ENCODE measurements at regions of chr3 and their contacts with region 1.

Region 1: GRCh38 chr3:105827959-105828358 is 40.9 kb downstream of the CBLB start:
- DNase-seq: peak; percentile 53
- H3K4me3 Mint-ChIP-seq: peak overlapping the region; percentile 27
- H3K27ac Mint-ChIP-seq: peak overlapping the region; percentile 100
- H3K4me1 Mint-ChIP-seq: peaks cover 87% of the 10 kb centered on the region
- H3K27me3 Mint-ChIP-seq: no peaks in the 10 kb centered on the region

Region 2: GRCh38 chr3:105366326-105367062 is 461.5 kb before region 1 on chr3 and contains the start of gene ALCAM:
- CTCF ChIA-PET with region 1: no interaction called
- POLR2A ChIA-PET with region 1: no interaction called
- intact Hi-C with region 1: loop called (anchors 2 kb)
- DNase-seq: peak; percentile 91
- H3K4me3 Mint-ChIP-seq: peak within 1 kb of the TSS; percentile 84
- H3K27ac Mint-ChIP-seq: peak within 1 kb of the TSS; percentile 97
- H3K4me1 Mint-ChIP-seq: peaks cover 28% of the 10 kb centered on the region
- H3K27me3 Mint-ChIP-seq: peaks cover 24% of the 10 kb centered on the region
- total RNA-seq, gene ALCAM: 20.3 to 20.6 TPM

Region 3: DNA sequence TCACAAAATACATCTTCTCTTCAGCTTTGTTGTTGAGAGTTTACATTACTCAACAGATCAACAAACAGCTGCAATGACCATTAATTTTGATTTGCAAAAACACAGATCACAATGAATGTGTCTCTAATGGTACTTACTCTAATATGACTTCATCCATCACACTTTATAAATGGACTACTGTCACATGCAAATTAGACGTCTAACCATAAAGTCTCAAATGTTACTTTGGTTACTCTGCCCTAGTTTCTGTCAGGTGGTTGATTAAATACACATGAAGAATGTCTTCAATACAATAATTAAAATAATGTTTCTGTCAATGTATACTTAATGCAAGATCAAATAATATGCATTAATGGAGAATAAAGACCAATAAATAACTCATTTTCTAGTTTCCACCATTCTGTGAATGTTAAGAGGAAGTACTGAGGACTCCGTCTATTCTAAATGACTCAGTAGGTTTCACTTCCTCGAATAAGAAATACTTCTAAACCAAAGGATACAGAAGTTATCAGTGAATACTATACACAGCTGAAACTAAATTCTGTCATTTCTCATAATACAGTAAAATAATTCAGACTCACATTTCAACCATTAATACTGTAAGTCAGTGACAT is 104.9 kb before region 1 on chr3:
- CTCF ChIA-PET with region 1: no interaction called
- POLR2A ChIA-PET with region 1: no interaction called
- intact Hi-C with region 1: no loop called
- DNase-seq: no peak
- H3K4me3 Mint-ChIP-seq: no peak overlapping the region
- H3K27ac Mint-ChIP-seq: no peak overlapping the region
- H3K4me1 Mint-ChIP-seq: peaks cover 14% of the 10 kb centered on the region
- H3K27me3 Mint-ChIP-seq: no peaks in the 10 kb centered on the region

Region 4: GRCh38 chr3:105747060-105747541 is 80.9 kb before region 1 on chr3:
- CTCF ChIA-PET with region 1: no interaction called
- POLR2A ChIA-PET with region 1: interaction called, 4 read pairs
- intact Hi-C with region 1: loop called (anchors 1 kb)
- DNase-seq: no peak
- H3K4me3 Mint-ChIP-seq: no peak overlapping the region
- H3K27ac Mint-ChIP-seq: peak overlapping the region; percentile 57
- H3K4me1 Mint-ChIP-seq: peaks cover 68% of the 10 kb centered on the region
- H3K27me3 Mint-ChIP-seq: no peaks in the 10 kb centered on the region

Region 5: DNA sequence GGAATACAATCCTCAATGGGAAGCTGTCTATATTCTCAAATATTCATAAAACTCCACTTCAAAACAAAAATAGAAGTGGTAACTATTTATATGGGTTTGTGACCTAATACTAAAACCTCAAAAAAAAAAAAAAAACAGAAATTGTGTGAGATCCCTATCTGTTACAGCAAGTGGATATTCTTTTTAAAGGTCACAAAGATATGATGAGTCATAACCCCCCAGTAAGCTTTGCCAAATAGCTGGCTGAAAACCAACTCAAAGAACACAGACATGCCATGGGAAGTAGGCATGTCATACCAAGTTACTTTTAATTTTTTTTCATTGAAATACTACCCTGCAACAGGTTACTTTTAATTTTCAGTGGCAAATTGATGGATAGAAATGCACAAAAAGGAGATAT is 21.6 kb before region 1 on chr3:
- CTCF ChIA-PET with region 1: interaction called, 3 read pairs
- POLR2A ChIA-PET with region 1: interaction called, 6 read pairs
- intact Hi-C with region 1: loop called (anchors 2 kb)
- DNase-seq: no peak
- H3K4me3 Mint-ChIP-seq: no peak overlapping the region
- H3K27ac Mint-ChIP-seq: peak overlapping the region; percentile 45
- H3K4me1 Mint-ChIP-seq: peaks cover 61% of the 10 kb centered on the region
- H3K27me3 Mint-ChIP-seq: no peaks in the 10 kb centered on the region

Region 6: GRCh38 chr3:106013971-106014370 is 186.0 kb after region 1 on chr3:
- CTCF ChIA-PET with region 1: no interaction called
- POLR2A ChIA-PET with region 1: no interaction called
- intact Hi-C with region 1: loop called (anchors 2 kb)
- DNase-seq: no peak
- H3K4me3 Mint-ChIP-seq: no peak overlapping the region
- H3K27ac Mint-ChIP-seq: peak overlapping the region; percentile 30
- H3K4me1 Mint-ChIP-seq: peaks cover 41% of the 10 kb centered on the region
- H3K27me3 Mint-ChIP-seq: no peaks in the 10 kb centered on the region

Region 7: DNA sequence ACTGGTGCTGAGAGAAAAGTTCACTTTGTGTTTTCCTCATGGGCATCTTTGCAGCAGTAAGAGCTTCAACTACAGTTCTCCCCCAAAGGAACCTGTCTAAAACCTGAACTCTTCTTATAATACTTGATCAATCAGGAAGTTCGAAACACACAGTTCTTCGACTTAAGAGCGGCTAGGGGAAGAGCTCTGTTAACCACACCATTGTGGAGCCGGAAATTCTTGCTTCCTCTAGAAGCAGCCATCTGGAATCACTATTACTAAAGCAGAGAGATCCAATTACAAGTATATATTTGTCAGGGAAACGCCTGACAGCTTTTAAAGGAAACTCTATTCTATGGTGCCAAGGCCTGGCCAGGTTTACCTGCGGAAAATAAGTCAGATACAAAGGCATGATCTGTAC is 378.2 kb after region 1 on chr3:
- CTCF ChIA-PET with region 1: no interaction called
- POLR2A ChIA-PET with region 1: no interaction called
- intact Hi-C with region 1: loop called (anchors 1 kb)
- DNase-seq: peak; percentile 24
- H3K4me3 Mint-ChIP-seq: peak overlapping the region; percentile 9
- H3K27ac Mint-ChIP-seq: peak overlapping the region; percentile 93
- H3K4me1 Mint-ChIP-seq: peaks cover 48% of the 10 kb centered on the region
- H3K27me3 Mint-ChIP-seq: no peaks in the 10 kb centered on the region

Region 8: DNA sequence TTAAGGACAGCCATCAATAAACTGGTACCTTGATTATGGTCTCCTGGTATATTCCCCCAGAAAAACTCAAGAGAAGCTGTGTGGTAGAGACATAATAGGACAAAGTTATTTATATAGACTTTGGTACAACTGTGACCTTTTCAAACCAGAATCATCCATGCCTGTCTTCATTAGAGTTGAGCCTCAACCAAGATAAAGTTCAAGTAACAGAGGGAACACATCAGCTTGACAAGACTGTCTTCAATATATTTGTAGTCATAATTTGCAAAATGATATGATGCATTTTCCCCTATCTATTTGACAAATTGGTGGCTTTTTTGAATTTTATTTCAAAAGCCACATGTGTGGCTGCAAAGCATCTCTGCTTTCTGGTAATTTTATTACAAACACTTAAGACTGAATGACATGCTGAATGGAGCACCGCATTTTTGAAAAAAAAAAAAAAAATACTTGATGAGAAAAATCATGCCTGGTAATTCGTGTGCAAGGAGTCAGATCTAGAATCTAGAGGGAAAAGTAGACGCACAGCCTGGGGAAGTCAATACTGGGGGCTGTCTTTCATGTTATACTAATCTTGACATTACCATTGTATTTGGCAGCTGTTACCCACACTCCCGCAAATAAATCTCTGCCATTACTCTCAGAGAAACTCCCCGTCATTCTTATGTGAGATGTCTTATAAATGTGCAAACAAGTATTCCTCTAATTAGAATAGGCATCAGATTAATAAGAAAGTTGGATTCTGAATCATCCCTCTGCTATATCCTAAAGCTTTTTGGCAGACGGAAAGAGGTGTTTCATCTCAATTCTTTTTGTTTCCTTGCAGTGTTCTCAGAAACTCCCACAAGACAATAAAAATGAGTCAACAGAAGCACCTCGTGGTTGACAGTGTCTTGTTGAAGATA is 595.6 kb after region 1 on chr3:
- CTCF ChIA-PET with region 1: no interaction called
- POLR2A ChIA-PET with region 1: interaction called, 3 read pairs
- intact Hi-C with region 1: loop called (anchors 1 kb)
- DNase-seq: peak; percentile 59
- H3K4me3 Mint-ChIP-seq: peak overlapping the region; percentile 18
- H3K27ac Mint-ChIP-seq: peak overlapping the region; percentile 94
- H3K4me1 Mint-ChIP-seq: peaks cover 54% of the 10 kb centered on the region
- H3K27me3 Mint-ChIP-seq: no peaks in the 10 kb centered on the region